Activated CD4-positive, alpha-beta memory T cell treated with anti-CD3 and anti-CD28 coated beads for 36 hours (primary cell): ENCODE measurements at regions of chr4 and their contacts with region 1.

Region 1: GRCh38 chr4:36244257-36245079 is at the start of gene ARAP2:
- DNase-seq: peak; percentile 86
- H3K4me3 Mint-ChIP-seq: peak within 1 kb of the TSS; percentile 97
- H3K27ac Mint-ChIP-seq: peak within 1 kb of the TSS; percentile 94
- H3K4me1 Mint-ChIP-seq: peaks cover 42% of the 10 kb centered on the region
- H3K27me3 Mint-ChIP-seq: no peaks in the 10 kb centered on the region
- total RNA-seq, gene ARAP2: 49.3 to 57.7 TPM

Region 2: DNA sequence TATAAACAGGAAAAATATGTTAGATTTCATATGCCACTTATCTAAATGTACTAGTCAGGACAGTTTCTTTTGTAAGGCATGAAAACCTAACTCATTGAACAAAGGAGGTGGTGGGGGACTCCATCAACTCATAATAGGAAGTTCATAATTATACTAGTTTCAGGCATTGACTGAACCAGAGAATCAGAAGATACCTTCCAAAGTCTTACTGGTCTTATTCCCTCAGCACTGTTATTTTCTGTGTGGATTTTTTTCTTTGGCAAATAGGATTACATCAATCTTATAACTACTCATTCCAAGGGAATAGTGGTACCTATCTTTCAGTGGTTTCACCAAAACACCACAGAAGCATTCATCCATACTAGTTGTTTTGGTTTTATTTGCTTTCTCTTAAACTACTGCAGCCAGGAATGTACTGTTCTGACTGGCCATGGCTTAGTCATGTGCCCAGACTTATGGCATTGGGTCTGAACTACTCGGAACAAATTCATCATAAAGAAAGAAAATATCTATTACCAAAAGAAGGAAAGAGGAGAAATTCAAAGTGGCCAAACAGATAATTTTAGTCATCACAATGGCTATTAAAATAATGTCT is 274.0 kb before region 1 on chr4:
- CTCF ChIA-PET with region 1: no interaction called
- POLR2A ChIA-PET with region 1: no interaction called
- intact Hi-C with region 1: loop called (anchors 10 kb)
- DNase-seq: peak; percentile 53
- H3K4me3 Mint-ChIP-seq: no peak overlapping the region
- H3K27ac Mint-ChIP-seq: no peak overlapping the region
- H3K4me1 Mint-ChIP-seq: peaks cover 11% of the 10 kb centered on the region
- H3K27me3 Mint-ChIP-seq: no peaks in the 10 kb centered on the region

Region 3: GRCh38 chr4:36208893-36209473 is 35.5 kb before region 1 on chr4:
- CTCF ChIA-PET with region 1: interaction called, 5 read pairs
- POLR2A ChIA-PET with region 1: interaction called, 5 read pairs
- intact Hi-C with region 1: loop called (anchors 1 kb)
- DNase-seq: peak; percentile 54
- H3K4me3 Mint-ChIP-seq: no peak overlapping the region
- H3K27ac Mint-ChIP-seq: peak overlapping the region; percentile 73
- H3K4me1 Mint-ChIP-seq: peaks cover 52% of the 10 kb centered on the region
- H3K27me3 Mint-ChIP-seq: no peaks in the 10 kb centered on the region

Region 4: DNA sequence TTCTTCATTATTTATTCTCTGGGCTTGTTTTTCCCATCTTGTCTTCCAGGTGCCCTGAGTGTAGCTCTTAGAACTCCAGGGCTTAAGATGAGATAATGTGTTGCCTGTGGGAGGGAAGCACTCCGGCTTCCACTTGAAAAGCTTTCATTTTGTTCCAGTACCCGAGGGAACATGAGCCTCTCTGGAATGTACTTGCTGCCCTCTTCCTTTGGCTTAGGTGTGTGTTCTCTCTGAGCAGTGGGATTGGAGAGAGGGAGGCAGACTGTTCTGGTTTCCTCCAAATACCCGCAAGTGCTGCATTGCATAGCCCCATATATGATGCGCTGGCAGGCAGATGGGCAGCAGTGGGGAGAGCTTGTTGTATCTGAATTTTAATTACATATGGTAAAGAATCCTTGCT is 36.1 kb after region 1 on chr4:
- CTCF ChIA-PET with region 1: interaction called, 6 read pairs
- POLR2A ChIA-PET with region 1: interaction called, 29 read pairs
- intact Hi-C with region 1: no loop called
- DNase-seq: no peak
- H3K4me3 Mint-ChIP-seq: no peak overlapping the region
- H3K27ac Mint-ChIP-seq: no peak overlapping the region
- H3K4me1 Mint-ChIP-seq: peaks cover 72% of the 10 kb centered on the region
- H3K27me3 Mint-ChIP-seq: no peaks in the 10 kb centered on the region

Region 5: GRCh38 chr4:36325499-36325898 is 81.0 kb after region 1 on chr4:
- CTCF ChIA-PET with region 1: interaction called, 11 read pairs
- POLR2A ChIA-PET with region 1: interaction called, 14 read pairs
- intact Hi-C with region 1: loop called (anchors 1 kb)
- DNase-seq: no peak
- H3K4me3 Mint-ChIP-seq: no peak overlapping the region
- H3K27ac Mint-ChIP-seq: peak overlapping the region; percentile 80
- H3K4me1 Mint-ChIP-seq: peaks cover 60% of the 10 kb centered on the region
- H3K27me3 Mint-ChIP-seq: no peaks in the 10 kb centered on the region

Region 6: GRCh38 chr4:36394352-36394903 is 150.0 kb after region 1 on chr4:
- CTCF ChIA-PET with region 1: interaction called, 15 read pairs
- POLR2A ChIA-PET with region 1: interaction called, 5 read pairs
- intact Hi-C with region 1: loop called (anchors 1 kb)
- DNase-seq: peak; percentile 60
- H3K4me3 Mint-ChIP-seq: peak overlapping the region; percentile 48
- H3K27ac Mint-ChIP-seq: peak overlapping the region; percentile 94
- H3K4me1 Mint-ChIP-seq: peaks cover 23% of the 10 kb centered on the region
- H3K27me3 Mint-ChIP-seq: peaks cover 2% of the 10 kb centered on the region